CD8-positive, alpha-beta T cell (primary cell): ENCODE measurements at regions of chr7 and their contacts with region 1.

Region 1: GRCh38 chr7:99918959-99919813 is at the start of gene TRIM4:
- DNase-seq: peak; percentile 74 to 95 (median 89)
- ATAC-seq: peak; percentile 95
- H3K4me3 ChIP-seq: peak within 1 kb of the TSS; percentile 65 to 93
- H3K4me3 Mint-ChIP-seq: peak within 1 kb of the TSS; percentile 92
- H3K27ac ChIP-seq: peak within 1 kb of the TSS; percentile 95 to 97
- H3K27ac Mint-ChIP-seq: peak within 1 kb of the TSS; percentile 98
- H3K4me1 ChIP-seq: peaks cover 43% of the 10 kb centered on the region
- H3K4me1 Mint-ChIP-seq: peaks cover 52% of the 10 kb centered on the region
- H3K27me3 ChIP-seq: no peaks in the 10 kb centered on the region
- H3K27me3 Mint-ChIP-seq: no peaks in the 10 kb centered on the region
- CTCF ChIP-seq: no peak
- total RNA-seq, gene TRIM4: 22.5 to 24.9 TPM

Region 2: DNA sequence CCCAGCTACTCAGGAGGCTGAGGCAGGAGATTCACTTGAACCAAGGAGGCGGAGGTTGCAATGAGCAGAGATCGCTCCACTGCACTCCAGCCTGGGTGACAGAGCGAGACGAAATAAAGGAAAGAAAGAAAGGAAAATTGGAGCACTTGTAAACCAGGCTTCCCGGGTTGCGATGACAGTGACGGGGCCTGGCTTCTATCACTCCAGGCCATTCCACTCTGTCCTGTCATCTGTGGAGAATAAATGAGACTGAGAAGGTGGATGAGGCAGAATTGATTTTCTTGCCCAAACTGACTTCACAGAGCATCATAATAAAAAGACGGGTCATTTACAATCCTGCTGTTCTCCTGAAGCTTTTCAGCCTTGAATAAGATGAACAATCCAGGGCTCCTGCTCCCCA is 699.2 kb before region 1 on chr7:
- CTCF ChIA-PET with region 1: no interaction called
- POLR2A ChIA-PET with region 1: no interaction called
- intact Hi-C with region 1: no loop called
- DNase-seq: no peak
- ATAC-seq: no peak
- H3K4me3 ChIP-seq: no peak overlapping the region
- H3K4me3 Mint-ChIP-seq: no peak overlapping the region
- H3K27ac ChIP-seq: no peak overlapping the region
- H3K27ac Mint-ChIP-seq: no peak overlapping the region
- H3K4me1 ChIP-seq: peaks cover 15% of the 10 kb centered on the region
- H3K4me1 Mint-ChIP-seq: peaks cover 22% of the 10 kb centered on the region
- H3K27me3 ChIP-seq: no peaks in the 10 kb centered on the region
- H3K27me3 Mint-ChIP-seq: no peaks in the 10 kb centered on the region
- CTCF ChIP-seq: no peak

Region 3: GRCh38 chr7:99624484-99624883 is 294.7 kb before region 1 on chr7:
- CTCF ChIA-PET with region 1: interaction called, 3 read pairs
- POLR2A ChIA-PET with region 1: interaction called, 3 read pairs
- intact Hi-C with region 1: loop called in 1 of 2 experiments (anchors 10 kb)
- DNase-seq: peak; percentile 57 to 96 (median 78)
- ATAC-seq: peak; percentile 92
- H3K4me3 ChIP-seq: peak overlapping the region; percentile 33 to 51
- H3K4me3 Mint-ChIP-seq: peak overlapping the region; percentile 90
- H3K27ac ChIP-seq: peak overlapping the region; percentile 71 to 87
- H3K27ac Mint-ChIP-seq: peak overlapping the region; percentile 99
- H3K4me1 ChIP-seq: peaks cover 36% of the 10 kb centered on the region
- H3K4me1 Mint-ChIP-seq: peaks cover 60% of the 10 kb centered on the region
- H3K27me3 ChIP-seq: no peaks in the 10 kb centered on the region
- H3K27me3 Mint-ChIP-seq: no peaks in the 10 kb centered on the region
- CTCF ChIP-seq: no peak

Region 4: DNA sequence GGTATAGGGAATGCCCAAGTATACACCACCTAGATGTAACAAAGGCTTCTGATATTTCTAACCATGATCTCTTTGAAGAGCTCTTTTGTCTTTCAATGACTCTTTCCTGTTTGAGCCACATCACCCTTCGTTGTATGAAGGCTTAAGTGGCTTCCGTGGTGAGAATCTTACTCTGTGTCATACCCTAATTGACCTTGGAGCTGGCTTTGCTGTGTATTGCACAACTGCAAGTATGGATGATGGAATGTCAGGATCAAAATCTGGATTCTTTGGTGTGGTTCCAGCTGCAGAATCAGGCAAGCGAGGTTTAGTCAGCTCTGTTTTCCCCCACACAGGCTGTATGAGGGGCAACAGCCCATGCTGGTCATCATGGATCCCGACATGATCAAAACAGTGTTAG is 75.4 kb before region 1 on chr7:
- CTCF ChIA-PET with region 1: no interaction called
- POLR2A ChIA-PET with region 1: no interaction called
- intact Hi-C with region 1: no loop called
- DNase-seq: no peak
- ATAC-seq: no peak
- H3K4me3 ChIP-seq: no peak overlapping the region
- H3K4me3 Mint-ChIP-seq: no peak overlapping the region
- H3K27ac ChIP-seq: no peak overlapping the region
- H3K27ac Mint-ChIP-seq: no peak overlapping the region
- H3K4me1 ChIP-seq: no peaks in the 10 kb centered on the region
- H3K4me1 Mint-ChIP-seq: no peaks in the 10 kb centered on the region
- H3K27me3 ChIP-seq: no peaks in the 10 kb centered on the region
- H3K27me3 Mint-ChIP-seq: peaks cover 5% of the 10 kb centered on the region
- CTCF ChIP-seq: no peak

Region 5: DNA sequence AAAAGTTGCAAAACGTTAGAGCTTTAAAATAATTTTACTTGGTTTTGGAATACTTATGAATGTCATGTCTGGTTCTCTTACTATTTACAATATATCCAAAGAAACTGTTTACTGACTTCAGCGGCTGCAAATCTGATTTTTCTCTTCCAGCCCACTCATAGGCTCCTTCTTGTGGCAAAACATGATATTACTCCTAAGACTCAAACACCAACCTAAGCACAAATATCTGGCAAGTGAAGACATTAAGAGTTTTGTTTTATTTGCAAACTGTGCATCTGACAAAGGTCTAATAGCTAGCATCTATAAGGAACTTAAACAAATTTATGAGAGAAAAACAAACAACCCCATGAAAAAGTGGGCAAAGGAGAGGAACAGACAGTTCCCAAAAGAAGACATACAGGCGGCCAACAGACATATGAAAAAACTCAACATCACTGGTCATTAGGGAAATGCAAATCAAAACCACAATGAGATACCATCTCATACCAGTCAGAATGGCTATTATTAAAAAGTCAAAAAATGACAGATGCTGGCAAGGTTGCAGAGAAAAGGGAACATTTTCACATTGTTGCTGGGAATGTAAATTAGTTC is 30.5 kb after region 1 on chr7:
- CTCF ChIA-PET with region 1: interaction called, 32 read pairs
- POLR2A ChIA-PET with region 1: no interaction called
- intact Hi-C with region 1: no loop called
- DNase-seq: peak in 2 of 9 experiments; percentile 33 to 35
- ATAC-seq: no peak
- H3K4me3 ChIP-seq: no peak overlapping the region
- H3K4me3 Mint-ChIP-seq: no peak overlapping the region
- H3K27ac ChIP-seq: no peak overlapping the region
- H3K27ac Mint-ChIP-seq: no peak overlapping the region
- H3K4me1 ChIP-seq: no peaks in the 10 kb centered on the region
- H3K4me1 Mint-ChIP-seq: no peaks in the 10 kb centered on the region
- H3K27me3 ChIP-seq: no peaks in the 10 kb centered on the region
- H3K27me3 Mint-ChIP-seq: peaks cover 20% of the 10 kb centered on the region
- CTCF ChIP-seq: no peak

Region 6: DNA sequence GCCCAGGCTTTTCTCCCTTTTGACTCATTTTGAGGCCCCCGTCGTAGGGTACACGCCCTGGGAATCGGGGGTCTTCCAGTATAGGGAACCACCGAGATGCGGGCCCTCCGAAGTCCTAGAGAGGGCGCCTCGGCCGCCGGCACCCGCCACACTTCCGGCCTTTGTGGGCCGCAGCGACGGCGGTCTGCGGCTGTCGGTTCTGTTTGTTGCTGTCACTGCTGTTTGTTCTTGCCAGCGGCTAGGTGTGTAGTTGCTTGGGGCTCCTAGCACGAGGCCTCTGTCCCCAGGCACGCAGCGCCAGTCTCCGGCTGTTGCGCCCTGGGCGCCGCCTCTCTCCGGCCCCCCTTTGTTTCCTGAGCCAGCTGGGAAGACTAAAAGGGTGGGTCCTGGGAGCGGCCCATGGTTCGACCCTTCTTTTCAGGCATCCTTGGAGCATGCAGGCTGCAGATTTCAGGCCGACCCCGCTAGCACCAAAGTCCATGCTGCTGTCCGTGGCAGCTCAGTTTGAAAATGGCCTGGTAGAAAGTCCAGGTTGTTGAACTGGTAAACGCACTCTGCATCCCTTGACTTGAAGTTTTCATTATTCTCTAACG is 78.5 kb after region 1 on chr7:
- CTCF ChIA-PET with region 1: interaction called, 194 read pairs
- POLR2A ChIA-PET with region 1: interaction called, 10 read pairs
- intact Hi-C with region 1: no loop called
- DNase-seq: peak; percentile 51 to 91 (median 74)
- ATAC-seq: peak; percentile 88
- H3K4me3 ChIP-seq: peak overlapping the region; percentile 48 to 54
- H3K4me3 Mint-ChIP-seq: peak overlapping the region; percentile 73
- H3K27ac ChIP-seq: peak overlapping the region; percentile 64 to 82
- H3K27ac Mint-ChIP-seq: peak overlapping the region; percentile 92
- H3K4me1 ChIP-seq: peaks cover 12% of the 10 kb centered on the region
- H3K4me1 Mint-ChIP-seq: peaks cover 11% of the 10 kb centered on the region
- H3K27me3 ChIP-seq: no peaks in the 10 kb centered on the region
- H3K27me3 Mint-ChIP-seq: no peaks in the 10 kb centered on the region
- CTCF ChIP-seq: no peak

Region 7: GRCh38 chr7:100049441-100050311 is 130.5 kb after region 1 on chr7 and contains the start of gene ZSCAN21:
- CTCF ChIA-PET with region 1: interaction called, 5 read pairs
- POLR2A ChIA-PET with region 1: interaction called, 3 read pairs
- intact Hi-C with region 1: loop called (anchors 1 to 2 kb)
- DNase-seq: peak; percentile 51 to 91 (median 84)
- ATAC-seq: peak; percentile 89
- H3K4me3 ChIP-seq: peak within 1 kb of the TSS; percentile 69 to 99
- H3K4me3 Mint-ChIP-seq: peak within 1 kb of the TSS; percentile 93
- H3K27ac ChIP-seq: peak within 1 kb of the TSS; percentile 87 to 96
- H3K27ac Mint-ChIP-seq: peak within 1 kb of the TSS; percentile 98
- H3K4me1 ChIP-seq: peaks cover 12% of the 10 kb centered on the region
- H3K4me1 Mint-ChIP-seq: peaks cover 25% of the 10 kb centered on the region
- H3K27me3 ChIP-seq: no peaks in the 10 kb centered on the region
- H3K27me3 Mint-ChIP-seq: no peaks in the 10 kb centered on the region
- CTCF ChIP-seq: no peak
- total RNA-seq, gene ZSCAN21: 4.8 to 5.7 TPM

Region 8: GRCh38 chr7:100126931-100127865 is 208.0 kb after region 1 on chr7 and contains the start of gene MBLAC1:
- CTCF ChIA-PET with region 1: interaction called, 41 read pairs
- POLR2A ChIA-PET with region 1: interaction called, 7 read pairs
- intact Hi-C with region 1: loop called in 1 of 2 experiments (anchors 2 kb)
- DNase-seq: peak; percentile 83 to 97 (median 93)
- ATAC-seq: peak; percentile 83
- H3K4me3 ChIP-seq: peak within 1 kb of the TSS; percentile 81 to 99
- H3K4me3 Mint-ChIP-seq: peak within 1 kb of the TSS; percentile 100
- H3K27ac ChIP-seq: peak within 1 kb of the TSS; percentile 92 to 98
- H3K27ac Mint-ChIP-seq: peak within 1 kb of the TSS; percentile 100
- H3K4me1 ChIP-seq: peaks cover 24% of the 10 kb centered on the region
- H3K4me1 Mint-ChIP-seq: peaks cover 39% of the 10 kb centered on the region
- H3K27me3 ChIP-seq: no peaks in the 10 kb centered on the region
- H3K27me3 Mint-ChIP-seq: no peaks in the 10 kb centered on the region
- CTCF ChIP-seq: no peak
- total RNA-seq, gene MBLAC1: 4.2 to 4.6 TPM

Region 9: GRCh38 chr7:100407285-100408180 is 488.3 kb after region 1 on chr7:
- CTCF ChIA-PET with region 1: no interaction called
- POLR2A ChIA-PET with region 1: no interaction called
- intact Hi-C with region 1: loop called in 1 of 2 experiments (anchors 10 kb)
- DNase-seq: peak in 6 of 9 experiments; percentile 9 to 84 (median 38)
- ATAC-seq: peak; percentile 99
- H3K4me3 ChIP-seq: no peak overlapping the region
- H3K4me3 Mint-ChIP-seq: no peak overlapping the region
- H3K27ac ChIP-seq: no peak overlapping the region
- H3K27ac Mint-ChIP-seq: no peak overlapping the region
- H3K4me1 ChIP-seq: no peaks in the 10 kb centered on the region
- H3K4me1 Mint-ChIP-seq: peaks cover 6% of the 10 kb centered on the region
- H3K27me3 ChIP-seq: no peaks in the 10 kb centered on the region
- H3K27me3 Mint-ChIP-seq: no peaks in the 10 kb centered on the region
- CTCF ChIP-seq: peak; percentile 77